ENCODE measurements at regions of chr9 and their contacts with region 1.

Region 1: DNA sequence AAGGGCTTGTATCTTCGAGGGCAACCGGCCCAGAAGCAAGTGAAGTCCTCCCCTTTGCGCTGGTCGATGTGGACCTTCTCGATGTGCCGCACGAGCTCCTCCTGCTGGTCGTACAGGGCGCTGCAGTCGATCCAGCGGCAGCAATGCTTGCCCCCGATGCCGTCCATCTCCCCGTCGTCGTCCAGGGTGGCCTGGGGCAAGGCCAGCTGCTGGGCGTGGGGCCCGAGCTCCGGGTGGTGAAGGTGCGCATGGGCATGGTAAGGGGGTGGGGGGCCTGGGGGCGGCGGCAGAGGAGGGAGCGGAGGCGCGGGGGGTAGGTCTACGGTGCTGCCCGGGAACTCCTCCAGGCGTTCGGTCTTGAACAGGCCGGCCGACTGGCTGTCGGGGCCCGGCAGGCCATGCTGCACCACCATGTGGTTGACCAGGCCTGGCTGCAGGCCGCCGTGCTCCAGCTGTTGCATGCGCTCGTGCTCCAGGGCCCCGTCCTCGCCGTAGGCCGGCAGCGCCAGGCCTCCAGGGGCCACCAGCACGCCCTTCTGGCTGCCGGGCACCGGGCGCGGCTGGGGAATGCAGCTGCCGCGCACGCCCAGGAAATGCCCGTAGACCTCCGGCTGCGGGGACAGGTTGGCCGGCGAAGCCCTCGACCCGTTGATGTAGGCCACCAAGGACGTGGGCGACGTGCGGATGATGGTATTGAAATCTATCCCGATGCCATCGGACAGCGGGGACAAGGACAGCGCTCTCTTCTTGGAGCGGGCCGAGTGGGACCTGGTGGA is 181.8 kb downstream of the GLIS3 start:
- DNase-seq: peak; percentile 79
- H3K4me3 Mint-ChIP-seq: no peak overlapping the region
- H3K27ac Mint-ChIP-seq: no peak overlapping the region
- H3K4me1 Mint-ChIP-seq: no peaks in the 10 kb centered on the region
- H3K27me3 Mint-ChIP-seq: no peaks in the 10 kb centered on the region

Region 2: DNA sequence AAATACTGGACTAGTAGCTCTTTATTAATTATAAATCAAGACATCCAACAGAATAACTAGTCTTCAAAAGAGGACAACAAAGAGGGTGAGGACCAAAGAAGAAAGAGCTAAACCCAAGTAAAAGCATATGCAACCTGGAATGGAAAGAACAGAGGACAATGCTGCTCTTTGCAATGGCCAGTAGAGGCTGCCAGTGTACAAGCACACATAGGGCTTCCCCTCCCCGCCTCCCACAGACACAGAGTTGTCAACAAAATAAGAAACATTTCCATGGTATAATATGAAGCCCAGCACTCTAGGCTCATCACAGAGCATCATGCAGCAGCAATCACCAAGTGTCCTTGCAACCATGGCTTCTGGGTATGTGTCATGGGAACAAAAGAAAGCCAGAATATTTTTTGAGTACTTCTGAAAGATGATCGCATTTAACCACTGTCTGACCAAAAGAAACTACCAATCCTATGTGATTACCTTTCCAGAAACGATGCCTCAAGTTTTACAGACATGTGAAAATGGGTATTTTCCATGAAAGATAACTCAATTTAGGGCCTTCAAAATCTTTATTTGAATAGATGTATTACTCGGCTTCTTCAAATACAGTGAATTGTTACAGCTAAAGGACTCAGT is 650.3 kb before region 1 on chr9:
- intact Hi-C with region 1: loop called (anchors 5 kb)
- DNase-seq: peak; percentile 86
- H3K4me3 Mint-ChIP-seq: no peak overlapping the region
- H3K27ac Mint-ChIP-seq: no peak overlapping the region
- H3K4me1 Mint-ChIP-seq: peaks cover 4% of the 10 kb centered on the region
- H3K27me3 Mint-ChIP-seq: no peaks in the 10 kb centered on the region

Region 3: GRCh38 chr9:3716415-3716814 is 401.6 kb before region 1 on chr9:
- intact Hi-C with region 1: no loop called
- DNase-seq: no peak
- H3K4me3 Mint-ChIP-seq: no peak overlapping the region
- H3K27ac Mint-ChIP-seq: no peak overlapping the region
- H3K4me1 Mint-ChIP-seq: no peaks in the 10 kb centered on the region
- H3K27me3 Mint-ChIP-seq: peaks cover 16% of the 10 kb centered on the region

Region 4: DNA sequence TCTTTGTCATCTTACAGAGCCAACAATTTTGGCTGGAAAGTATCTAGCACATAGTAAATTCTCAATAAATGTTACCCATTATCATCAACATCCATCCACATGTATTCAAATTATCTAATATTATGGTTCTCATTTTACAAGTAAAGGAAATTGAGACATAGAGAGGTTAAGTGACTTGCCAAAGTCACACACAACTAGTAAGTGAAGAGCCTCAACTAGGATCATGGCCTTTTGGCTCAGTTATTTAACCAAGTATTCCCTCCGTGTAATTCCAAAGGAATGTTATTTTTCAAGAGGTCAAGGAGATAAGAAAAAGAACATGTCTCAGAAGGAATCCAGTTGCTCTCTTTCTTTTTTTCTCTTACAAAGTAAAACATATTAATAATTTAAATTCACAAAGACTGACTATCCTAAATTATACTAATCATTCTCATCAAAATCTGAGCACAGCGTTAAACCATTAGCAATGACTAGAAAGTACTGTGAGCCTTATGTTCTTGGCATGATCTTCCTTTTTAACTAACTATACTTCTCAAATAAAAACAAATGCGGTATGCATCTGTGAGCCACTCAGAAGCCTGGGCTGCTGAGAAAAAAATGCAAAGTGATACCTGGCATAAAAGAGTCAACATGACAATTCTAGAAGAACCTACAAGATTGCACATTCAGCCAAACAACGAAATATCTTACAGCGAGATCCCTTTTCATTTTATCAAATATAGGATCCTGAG is 169.0 kb before region 1 on chr9:
- intact Hi-C with region 1: loop called (anchors 10 kb)
- DNase-seq: no peak
- H3K4me3 Mint-ChIP-seq: no peak overlapping the region
- H3K27ac Mint-ChIP-seq: no peak overlapping the region
- H3K4me1 Mint-ChIP-seq: no peaks in the 10 kb centered on the region
- H3K27me3 Mint-ChIP-seq: no peaks in the 10 kb centered on the region

Region 5: GRCh38 chr9:4137234-4137633 is 19.2 kb after region 1 on chr9:
- intact Hi-C with region 1: no loop called
- DNase-seq: no peak
- H3K4me3 Mint-ChIP-seq: no peak overlapping the region
- H3K27ac Mint-ChIP-seq: no peak overlapping the region
- H3K4me1 Mint-ChIP-seq: no peaks in the 10 kb centered on the region
- H3K27me3 Mint-ChIP-seq: no peaks in the 10 kb centered on the region

Measured in activated CD4-positive, alpha-beta T cell treated with anti-CD3 and anti-CD28 coated beads, Interleukin-2, amount 10 ng/mL, durations not matched to agents 24 days and 14 days (primary cell).